ENCODE measurements at regions of chr6 and their contacts with region 1.

Region 1: GRCh38 chr6:7389451-7390225 is at the starts of genes CAGE1 and RIOK1:
- DNase-seq: peak; percentile 97
- H3K4me3 Mint-ChIP-seq: peak within 1 kb of the TSS; percentile 94
- H3K27ac Mint-ChIP-seq: peak within 1 kb of the TSS; percentile 97
- H3K4me1 Mint-ChIP-seq: peaks cover 40% of the 10 kb centered on the region
- H3K27me3 Mint-ChIP-seq: no peaks in the 10 kb centered on the region
- total RNA-seq, gene CAGE1: 0.25 to 0.26 TPM
- total RNA-seq, gene RIOK1: 33.8 to 38.5 TPM

Region 2: GRCh38 chr6:7295916-7296315 is 93.7 kb before region 1 on chr6:
- CTCF ChIA-PET with region 1: no interaction called
- intact Hi-C with region 1: no loop called
- DNase-seq: no peak
- H3K4me3 Mint-ChIP-seq: no peak overlapping the region
- H3K27ac Mint-ChIP-seq: no peak overlapping the region
- H3K4me1 Mint-ChIP-seq: peaks cover 10% of the 10 kb centered on the region
- H3K27me3 Mint-ChIP-seq: no peaks in the 10 kb centered on the region

Region 3: DNA sequence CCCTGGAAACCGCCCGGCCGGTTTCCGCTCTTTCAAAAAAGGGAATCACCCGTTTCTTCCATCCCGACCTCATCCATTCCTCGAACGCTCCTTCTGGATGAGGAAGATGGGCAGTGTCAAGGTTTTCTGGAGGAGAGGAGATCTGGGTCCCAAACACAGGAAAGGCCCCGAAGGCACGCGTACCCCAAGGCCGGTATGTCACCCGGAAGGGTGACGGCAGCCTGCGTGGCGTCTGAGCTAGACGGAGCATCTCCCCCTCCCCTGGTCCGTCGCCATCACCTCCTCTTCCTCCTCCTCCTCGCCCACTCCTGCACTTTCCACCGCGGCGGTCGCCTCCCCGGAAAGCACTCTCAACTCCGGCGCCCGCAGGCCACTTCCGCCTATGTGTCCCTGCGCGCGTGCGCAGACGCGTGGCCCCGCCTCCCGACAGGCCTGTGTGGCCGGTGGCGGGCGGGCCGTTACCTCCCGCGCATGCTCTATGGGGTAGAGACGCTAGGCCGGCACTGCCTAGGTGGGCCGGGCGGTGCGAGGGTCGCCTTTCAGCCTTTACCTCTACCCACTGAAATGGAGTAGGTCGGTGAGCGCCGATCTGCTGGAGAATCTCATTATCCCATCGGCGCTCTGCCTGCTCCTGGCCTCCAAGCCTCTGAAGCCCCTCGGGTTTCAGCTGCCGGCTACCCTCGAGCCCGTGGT is 1045.7 kb after region 1 on chr6 and contains the start of gene SLC35B3:
- CTCF ChIA-PET with region 1: no interaction called
- intact Hi-C with region 1: loop called (anchors 2 kb)
- DNase-seq: peak; percentile 97
- H3K4me3 Mint-ChIP-seq: peak within 1 kb of the TSS; percentile 89
- H3K27ac Mint-ChIP-seq: peak within 1 kb of the TSS; percentile 94
- H3K4me1 Mint-ChIP-seq: peaks cover 32% of the 10 kb centered on the region
- H3K27me3 Mint-ChIP-seq: no peaks in the 10 kb centered on the region
- total RNA-seq, gene SLC35B3: 7.7 to 8.0 TPM